ENCODE measurements at regions of chr14 and their contacts with region 1.

Region 1: GRCh38 chr14:55097881-55098560 is 31.0 kb upstream of the LGALS3 start:
- DNase-seq: no peak
- ATAC-seq: no peak
- H3K4me3 ChIP-seq: no peak overlapping the region
- H3K27ac ChIP-seq: no peak overlapping the region
- H3K4me1 ChIP-seq: peaks cover 9% of the 10 kb centered on the region
- H3K27me3 ChIP-seq: no peaks in the 10 kb centered on the region
- CTCF ChIP-seq: no peak

Region 2: DNA sequence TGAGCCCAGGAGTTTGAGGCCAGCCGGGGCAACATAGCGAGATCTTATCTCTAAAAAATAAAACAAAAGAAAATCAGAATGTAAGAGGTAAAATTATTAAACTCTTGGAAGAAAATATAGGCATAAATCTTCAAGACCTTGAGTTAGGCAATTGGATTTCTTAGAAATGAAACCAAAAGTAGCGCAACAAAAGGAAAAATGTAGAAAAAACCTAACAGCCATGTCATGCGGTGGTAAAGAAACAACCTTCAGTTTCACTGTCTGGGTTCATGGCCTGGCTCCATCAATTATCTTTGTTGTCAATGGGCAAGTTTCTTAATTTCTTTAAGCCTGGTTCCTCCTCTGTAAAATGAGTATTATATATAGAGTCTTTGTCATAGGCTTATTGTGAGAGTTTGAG is 189.8 kb before region 1 on chr14:
- intact Hi-C with region 1: no loop called
- DNase-seq: no peak
- ATAC-seq: no peak
- H3K4me3 ChIP-seq: no peak overlapping the region
- H3K27ac ChIP-seq: no peak overlapping the region
- H3K4me1 ChIP-seq: no peaks in the 10 kb centered on the region
- H3K27me3 ChIP-seq: no peaks in the 10 kb centered on the region
- CTCF ChIP-seq: no peak

Region 3: DNA sequence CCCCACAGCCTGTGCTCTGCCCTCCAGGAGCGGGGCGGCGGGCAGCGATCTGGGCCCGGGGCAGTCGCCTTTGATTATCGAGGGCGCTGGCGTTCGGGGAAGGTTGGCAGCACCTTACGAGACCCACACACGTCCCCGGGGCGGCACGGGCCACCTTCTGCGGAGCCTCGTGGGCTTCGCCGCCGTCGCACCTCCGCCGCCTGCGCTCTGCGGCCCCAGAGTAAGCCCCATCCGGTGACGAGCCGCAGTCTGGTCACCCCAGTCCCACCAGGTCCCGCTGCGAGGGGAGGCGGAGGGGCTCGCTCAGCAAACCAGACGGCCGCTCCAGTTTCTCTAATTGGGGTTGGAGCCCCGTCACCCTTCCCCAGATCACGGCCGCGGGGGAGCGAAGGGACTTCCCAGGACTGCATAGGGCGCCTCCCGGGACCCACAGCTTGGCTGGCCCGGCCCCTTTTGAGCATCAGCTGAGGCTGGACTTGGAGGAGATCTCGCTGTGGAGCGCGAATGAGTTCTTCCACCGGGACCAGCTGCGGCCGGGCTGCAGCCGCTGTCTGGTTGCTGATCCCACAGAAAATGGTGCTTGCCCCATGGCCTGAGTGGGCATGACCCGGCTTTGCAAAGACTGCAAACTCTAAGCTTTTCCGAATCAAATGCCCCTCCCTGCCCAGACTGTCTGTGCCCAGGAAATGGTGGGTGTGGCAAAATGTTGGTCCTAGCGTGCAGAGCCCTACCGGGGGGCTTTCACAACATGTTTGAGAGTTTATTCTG is 31.6 kb after region 1 on chr14:
- intact Hi-C with region 1: loop called in 1 of 2 experiments (anchors 5 kb)
- DNase-seq: peak; percentile 69 to 84
- ATAC-seq: peak; percentile 55 to 72 (median 58)
- H3K4me3 ChIP-seq: peak overlapping the region; percentile 79
- H3K27ac ChIP-seq: peak overlapping the region; percentile 81
- H3K4me1 ChIP-seq: no peaks in the 10 kb centered on the region
- H3K27me3 ChIP-seq: peaks cover 0 to 1% (median 0%) of the 10 kb centered on the region in 3 donors
- CTCF ChIP-seq: no peak

Region 4: GRCh38 chr14:55157080-55157479 is 59.1 kb after region 1 on chr14:
- intact Hi-C with region 1: loop called in 1 of 2 experiments (anchors 5 kb)
- DNase-seq: no peak
- ATAC-seq: no peak
- H3K4me3 ChIP-seq: no peak overlapping the region
- H3K27ac ChIP-seq: no peak overlapping the region
- H3K4me1 ChIP-seq: no peaks in the 10 kb centered on the region
- H3K27me3 ChIP-seq: no peaks in the 10 kb centered on the region
- CTCF ChIP-seq: no peak

Region 5: GRCh38 chr14:55430024-55430690 is 332.1 kb after region 1 on chr14:
- intact Hi-C with region 1: loop called in 1 of 2 experiments (anchors 10 kb)
- DNase-seq: no peak
- ATAC-seq: peak; percentile 84 to 98 (median 91)
- H3K4me3 ChIP-seq: no peak overlapping the region
- H3K27ac ChIP-seq: peak overlapping the region; percentile 38
- H3K4me1 ChIP-seq: no peaks in the 10 kb centered on the region
- H3K27me3 ChIP-seq: no peaks in the 10 kb centered on the region
- CTCF ChIP-seq: peak; percentile 55